ENCODE measurements at regions of chr15 and their contacts with region 1.

Region 1: DNA sequence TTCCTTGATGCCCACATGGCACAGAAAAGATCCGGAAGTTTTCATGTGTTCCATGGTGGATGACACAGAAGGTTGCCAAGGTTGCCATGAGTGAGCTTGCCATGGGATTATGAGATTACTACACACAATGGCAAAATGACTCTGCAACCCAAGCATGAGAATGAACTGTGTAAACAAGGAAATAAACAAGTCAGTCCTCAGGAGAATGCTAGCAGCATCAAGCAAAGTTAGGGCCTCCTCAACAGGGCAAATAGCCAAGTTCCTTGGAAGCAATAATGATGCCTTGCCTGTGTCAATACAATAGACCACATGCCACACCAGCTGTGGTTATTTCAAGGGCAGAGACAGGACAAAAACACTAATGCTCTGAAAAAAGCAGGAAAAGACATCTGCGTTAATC is 41.8 kb downstream of the AQR start:
- DNase-seq: peak; percentile 12 to 78
- ATAC-seq: peak; percentile 80 to 84
- H3K4me3 ChIP-seq: no peak overlapping the region
- H3K27ac ChIP-seq: no peak overlapping the region
- H3K4me1 ChIP-seq: 0 out of 3 replicates have a peak, but pooled peaks cover 4% of the 10 kb centered on the region
- CTCF ChIP-seq: no peak
- EP300 ChIP-seq: no peak
- POLR2A ChIP-seq: no peak
- RAD21 ChIP-seq: no peak

Region 2: GRCh38 chr15:34616613-34617012 is 311.1 kb before region 1 on chr15:
- CTCF ChIA-PET with region 1: interaction called, 97 read pairs
- POLR2A ChIA-PET with region 1: no interaction called
- DNase-seq: peak; percentile 17 to 58
- ATAC-seq: peak; percentile 83 to 90
- H3K4me3 ChIP-seq: no peak overlapping the region
- H3K27ac ChIP-seq: no peak overlapping the region
- H3K4me1 ChIP-seq: no peaks in the 10 kb centered on the region
- CTCF ChIP-seq: peak; percentile 33; the same call in 2 of the 3 replicates
- EP300 ChIP-seq: no peak
- POLR2A ChIP-seq: no peak
- RAD21 ChIP-seq: peak; percentile 27; a peak in 2 of 5 replicates

Region 3: DNA sequence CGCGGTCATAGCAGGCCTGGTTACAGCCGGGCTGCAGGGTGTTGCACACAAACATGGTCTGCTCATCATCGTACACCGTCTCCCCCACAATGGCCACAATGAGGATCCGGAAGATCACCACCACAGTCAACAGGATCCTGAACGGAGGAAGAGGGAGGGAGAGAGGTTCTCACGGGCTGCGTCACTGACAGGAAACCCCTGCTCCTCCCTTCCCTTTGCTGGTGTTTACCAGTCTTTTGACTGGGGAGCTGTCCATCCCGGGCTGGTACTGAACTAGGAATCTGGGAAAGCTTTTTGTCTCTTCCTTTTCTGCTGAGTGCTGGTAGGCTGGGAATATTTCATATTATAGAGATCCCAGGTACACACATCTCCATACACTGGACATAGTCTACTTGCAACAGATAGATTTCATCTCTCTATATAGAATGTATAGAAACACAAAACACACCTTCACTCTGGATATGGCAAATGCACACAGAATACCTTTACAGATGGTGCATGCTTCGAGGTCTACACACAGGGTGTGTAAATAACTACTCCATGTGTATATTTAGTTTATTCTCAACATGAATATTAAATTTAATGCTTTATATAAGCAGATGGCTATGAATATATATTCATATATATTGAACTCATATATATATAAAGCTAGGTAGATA is 174.4 kb before region 1 on chr15:
- CTCF ChIA-PET with region 1: no interaction called
- POLR2A ChIA-PET with region 1: no interaction called
- DNase-seq: peak in 1 of 2 experiments; percentile 37
- ATAC-seq: peak in 1 of 2 experiments; percentile 41; a peak in 4 of 6 replicates
- H3K4me3 ChIP-seq: no peak overlapping the region
- H3K27ac ChIP-seq: no peak overlapping the region
- H3K4me1 ChIP-seq: peaks cover 8% of the 10 kb centered on the region; the same call in 1 of the 3 replicates
- CTCF ChIP-seq: no peak
- EP300 ChIP-seq: no peak
- POLR2A ChIP-seq: no peak
- RAD21 ChIP-seq: no peak

Region 4: GRCh38 chr15:34865531-34865930 is 62.2 kb before region 1 on chr15:
- CTCF ChIA-PET with region 1: no interaction called
- POLR2A ChIA-PET with region 1: no interaction called
- DNase-seq: no peak
- ATAC-seq: no peak
- H3K4me3 ChIP-seq: no peak overlapping the region
- H3K27ac ChIP-seq: no peak overlapping the region
- H3K4me1 ChIP-seq: no peaks in the 10 kb centered on the region
- CTCF ChIP-seq: no peak
- EP300 ChIP-seq: no peak
- POLR2A ChIP-seq: no peak
- RAD21 ChIP-seq: no peak

Region 5: DNA sequence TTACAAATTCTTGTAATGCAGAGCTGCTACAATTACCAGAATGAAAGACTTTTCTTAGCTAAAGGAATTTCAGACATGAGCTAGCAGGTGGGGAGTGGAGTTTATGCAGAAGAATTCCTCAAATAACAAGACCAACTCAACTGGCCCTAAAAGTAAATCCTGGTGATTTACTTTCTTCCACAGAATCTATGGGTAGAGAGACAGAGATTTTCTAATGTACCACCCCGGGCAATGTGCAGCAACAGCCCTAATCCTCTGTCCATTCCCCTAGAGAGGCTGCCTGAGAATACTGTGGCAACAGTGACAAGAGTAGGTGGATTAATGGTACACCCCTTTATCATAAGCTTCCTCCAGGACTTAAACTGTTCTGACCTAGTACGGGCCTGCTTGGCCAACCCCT is 13.4 kb before region 1 on chr15:
- CTCF ChIA-PET with region 1: interaction called, 15 read pairs
- POLR2A ChIA-PET with region 1: no interaction called
- DNase-seq: no peak
- ATAC-seq: no peak
- H3K4me3 ChIP-seq: no peak overlapping the region
- H3K27ac ChIP-seq: no peak overlapping the region
- H3K4me1 ChIP-seq: no peaks in the 10 kb centered on the region
- CTCF ChIP-seq: no peak
- EP300 ChIP-seq: no peak
- POLR2A ChIP-seq: no peak
- RAD21 ChIP-seq: no peak

Region 6: DNA sequence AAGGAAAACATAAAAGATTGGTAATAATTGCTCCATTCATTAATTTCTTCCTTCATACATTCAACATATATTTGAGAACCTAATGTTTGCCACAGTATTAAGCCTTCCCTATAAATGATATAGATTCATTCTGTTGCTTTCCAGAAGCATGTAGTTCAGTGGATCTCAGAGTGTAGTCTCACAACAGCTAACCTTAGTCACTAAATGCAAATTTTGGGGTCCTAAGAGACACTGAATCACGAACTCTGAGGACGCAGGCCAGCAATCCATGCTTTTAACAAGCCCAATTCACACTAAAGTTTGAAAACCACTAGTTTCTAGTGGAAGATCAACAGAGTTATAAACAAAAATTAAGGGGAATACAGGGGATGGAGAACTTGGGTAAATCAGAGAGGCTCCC is 49.0 kb after region 1 on chr15:
- CTCF ChIA-PET with region 1: no interaction called
- POLR2A ChIA-PET with region 1: no interaction called
- DNase-seq: no peak
- ATAC-seq: no peak
- H3K4me3 ChIP-seq: no peak overlapping the region
- H3K27ac ChIP-seq: no peak overlapping the region
- H3K4me1 ChIP-seq: no peaks in the 10 kb centered on the region
- CTCF ChIP-seq: no peak
- EP300 ChIP-seq: no peak
- POLR2A ChIP-seq: no peak
- RAD21 ChIP-seq: no peak

Measured in A549 (cell line).